ENCODE measurements at regions of chr2 and their contacts with region 1.

Region 1: DNA sequence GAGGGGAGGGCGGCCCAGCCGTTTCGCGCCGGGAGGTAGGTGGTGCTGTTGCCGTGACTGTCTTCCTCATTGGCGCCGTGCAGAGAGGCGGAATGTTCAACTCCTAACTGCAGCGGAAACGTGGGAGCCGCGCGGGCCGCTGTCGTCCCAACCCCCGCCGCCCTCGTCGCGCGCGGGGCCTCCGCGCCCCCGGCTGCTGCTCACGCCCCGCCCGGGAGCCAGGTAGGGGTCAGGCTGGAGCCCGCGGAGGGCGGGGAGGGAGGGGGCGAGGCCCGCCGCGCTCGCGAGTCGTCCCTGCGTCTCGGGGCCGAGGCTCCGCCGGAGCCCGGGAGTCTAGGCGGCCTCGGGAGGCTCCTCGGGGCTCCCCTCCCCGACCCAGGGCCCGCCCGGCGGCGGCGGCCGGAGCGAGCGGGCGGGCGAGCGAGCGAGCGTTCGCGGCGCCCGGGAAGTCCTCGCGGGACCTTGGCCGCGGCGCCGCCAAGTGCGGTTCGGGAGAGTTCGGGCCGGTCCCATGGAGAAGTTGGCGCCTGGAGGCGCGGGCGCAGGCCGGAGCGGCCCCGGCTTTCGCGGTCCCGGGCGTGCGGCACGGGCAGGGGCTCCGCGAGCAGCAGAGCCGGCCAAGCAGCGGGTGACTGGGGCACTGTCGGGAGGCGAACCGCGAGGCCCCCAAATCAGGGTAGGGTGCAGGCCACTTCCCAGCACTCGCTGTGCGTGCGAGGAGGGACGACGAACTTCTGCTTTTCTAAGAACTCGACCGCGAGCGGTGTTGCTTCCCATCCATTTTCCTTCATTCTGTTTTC is at the start of gene MAP3K20:
- DNase-seq: peak; percentile 83
- H3K4me3 ChIP-seq: peak within 1 kb of the TSS; percentile 88
- H3K27ac ChIP-seq: peak within 1 kb of the TSS; percentile 98
- H3K4me1 ChIP-seq: peaks cover 69% of the 10 kb centered on the region
- H3K27me3 ChIP-seq: no peaks in the 10 kb centered on the region
- CTCF ChIP-seq: peak; percentile 67
- total RNA-seq, gene MAP3K20: 466 TPM

Region 2: GRCh38 chr2:173021939-173022371 is 54.0 kb before region 1 on chr2:
- intact Hi-C with region 1: no loop called
- DNase-seq: peak; percentile 59
- H3K4me3 ChIP-seq: no peak overlapping the region
- H3K27ac ChIP-seq: peak overlapping the region; percentile 63
- H3K4me1 ChIP-seq: peaks cover 30% of the 10 kb centered on the region
- H3K27me3 ChIP-seq: no peaks in the 10 kb centered on the region
- CTCF ChIP-seq: peak; percentile 56

Region 3: DNA sequence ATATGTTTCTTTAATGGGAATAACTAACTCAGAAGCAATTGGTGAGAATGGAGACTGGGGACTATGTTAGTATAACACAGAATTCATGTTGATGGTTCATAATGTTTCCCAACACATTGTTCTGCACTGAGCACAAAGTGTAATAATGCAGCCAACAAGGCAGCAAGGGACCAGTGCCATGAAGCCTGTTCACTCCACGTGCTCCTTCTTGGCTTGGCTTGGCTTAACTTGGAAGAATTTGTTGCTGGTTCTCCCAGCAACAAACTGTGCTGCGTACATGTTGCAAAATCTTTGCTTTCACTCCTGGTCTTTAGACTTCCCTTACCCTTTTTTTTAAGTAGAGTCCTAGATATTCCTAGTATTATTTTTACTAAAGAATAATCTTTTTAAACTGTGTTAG is 129.4 kb after region 1 on chr2:
- intact Hi-C with region 1: loop called (anchors 10 kb)
- DNase-seq: peak; percentile 75
- H3K4me3 ChIP-seq: no peak overlapping the region
- H3K27ac ChIP-seq: peak overlapping the region; percentile 87
- H3K4me1 ChIP-seq: peaks cover 83% of the 10 kb centered on the region
- H3K27me3 ChIP-seq: no peaks in the 10 kb centered on the region
- CTCF ChIP-seq: no peak